Right cardiac atrium (tissue), 5 donors: ENCODE measurements at regions of chr16 and their contacts with region 1.

Region 1: DNA sequence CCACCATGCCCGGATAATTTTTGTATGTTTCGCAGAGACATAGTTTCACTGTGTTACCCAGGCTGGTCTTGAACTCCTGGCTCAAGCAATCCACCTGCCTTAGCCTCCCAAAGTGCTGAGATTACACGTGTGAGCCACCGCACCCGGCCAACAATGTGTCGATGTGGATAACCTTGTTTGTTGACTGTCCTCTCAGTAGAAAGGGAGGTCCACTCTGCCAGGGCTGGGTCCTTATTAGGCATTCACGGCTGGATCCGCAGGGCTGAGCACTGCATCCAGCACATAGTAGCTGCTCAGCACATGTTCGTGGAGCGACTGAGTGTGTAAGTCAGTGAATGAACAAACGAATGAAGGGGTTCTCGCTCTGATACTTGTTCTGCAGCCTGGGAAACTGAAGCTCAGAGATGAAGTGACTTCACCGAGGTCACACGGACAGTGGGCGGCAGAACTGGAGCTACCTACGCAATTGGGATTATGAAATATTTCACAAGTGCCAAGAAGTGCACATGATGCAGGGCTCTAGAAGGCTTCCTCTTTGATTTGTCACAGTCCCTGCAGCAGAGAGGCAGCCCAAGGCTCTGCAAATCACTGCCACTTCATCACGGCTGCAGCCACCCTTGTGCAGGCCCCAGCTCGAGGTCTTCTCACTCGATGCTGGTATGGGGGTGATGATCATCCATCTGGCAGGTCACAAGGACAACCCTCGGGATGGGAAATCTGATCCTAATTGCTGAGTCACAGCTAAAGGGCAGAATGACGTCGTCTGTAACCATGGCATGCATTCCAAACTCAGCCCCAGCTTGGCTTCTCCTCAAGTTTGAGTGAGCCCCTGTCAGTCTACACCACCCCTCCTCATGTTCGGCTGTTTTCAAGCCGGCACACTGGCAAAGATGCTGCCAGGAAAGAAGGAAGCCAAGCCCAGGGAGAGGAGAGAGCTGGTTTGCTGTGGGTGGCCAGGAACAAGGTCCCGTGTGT is 28.0 kb upstream of the SNN start:
- DNase-seq: peak; percentile 90 to 92 (median 92)
- ATAC-seq: peak; percentile 95 to 96
- H3K4me3 ChIP-seq: no peak overlapping the region
- H3K27ac ChIP-seq: peak overlapping the region; percentile 99
- H3K4me1 ChIP-seq: peaks cover 8% of the 10 kb centered on the region
- H3K27me3 ChIP-seq: no peaks in the 10 kb centered on the region

Region 2: GRCh38 chr16:10964039-10964890 is 675.9 kb before region 1 on chr16:
- intact Hi-C with region 1: loop called in 1 of 4 experiments (anchors 10 kb)
- DNase-seq: peak; percentile 82 to 93 (median 92)
- ATAC-seq: peak; percentile 86 to 89
- H3K4me3 ChIP-seq: no peak overlapping the region
- H3K27ac ChIP-seq: peak overlapping the region; percentile 13
- H3K4me1 ChIP-seq: peaks cover 3% of the 10 kb centered on the region
- H3K27me3 ChIP-seq: no peaks in the 10 kb centered on the region

Region 3: GRCh38 chr16:11396241-11397048 is 243.8 kb before region 1 on chr16:
- intact Hi-C with region 1: loop called in 1 of 4 experiments (anchors 5 kb)
- DNase-seq: peak; percentile 71 to 89 (median 89)
- ATAC-seq: peak; percentile 77 to 81
- H3K4me3 ChIP-seq: no peak overlapping the region
- H3K27ac ChIP-seq: no peak overlapping the region
- H3K4me1 ChIP-seq: no peaks in the 10 kb centered on the region
- H3K27me3 ChIP-seq: no peaks in the 10 kb centered on the region

Region 4: DNA sequence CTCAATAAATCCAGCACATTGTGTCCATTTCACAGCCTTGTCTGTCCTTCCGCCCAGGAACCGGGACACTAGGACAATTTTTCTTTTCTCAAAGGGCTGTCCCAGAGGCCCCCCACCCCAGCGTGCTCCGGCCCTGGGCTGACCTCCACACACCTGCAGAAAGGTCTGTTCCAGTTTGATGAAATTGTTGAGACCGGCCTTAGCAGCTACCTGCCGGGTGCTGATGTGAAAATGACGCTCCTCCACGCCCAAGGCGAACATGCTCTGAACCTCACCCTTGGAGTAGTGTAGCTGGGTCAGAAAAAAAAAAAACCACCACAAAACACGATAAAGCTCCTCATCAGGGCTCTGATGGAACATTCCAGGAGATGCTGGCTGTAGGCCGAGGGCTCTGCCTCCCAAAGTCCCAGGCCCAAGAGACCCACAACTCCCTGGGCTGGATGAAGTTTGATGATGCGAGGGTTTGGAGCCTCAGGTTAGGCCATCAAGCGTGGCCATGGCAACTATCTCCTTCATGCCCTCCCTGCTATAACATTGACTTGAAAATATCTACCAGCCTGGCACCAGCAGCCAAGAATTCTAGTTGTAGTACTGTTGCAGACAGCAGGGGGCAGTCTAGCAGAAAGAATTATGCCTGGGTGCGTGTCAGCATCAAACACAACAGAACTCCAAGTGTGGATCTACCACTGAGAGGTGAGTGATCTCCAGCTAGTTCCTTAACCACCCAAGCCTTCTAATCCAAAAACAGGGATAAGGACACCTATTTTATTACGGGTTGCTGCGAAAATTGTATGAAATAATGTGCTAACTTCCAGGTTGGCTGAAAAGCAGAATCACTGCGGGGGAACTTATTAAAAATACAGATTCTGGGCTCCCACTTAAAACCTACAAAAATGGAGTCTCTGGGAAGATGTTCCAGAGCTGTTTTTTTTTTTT is 232.9 kb before region 1 on chr16:
- intact Hi-C with region 1: loop called in 1 of 4 experiments (anchors 5 kb)
- DNase-seq: peak in 1 of 3 donors; percentile 69
- ATAC-seq: peak in 1 of 2 donors; percentile 49
- H3K4me3 ChIP-seq: no peak overlapping the region
- H3K27ac ChIP-seq: no peak overlapping the region
- H3K4me1 ChIP-seq: no peaks in the 10 kb centered on the region
- H3K27me3 ChIP-seq: no peaks in the 10 kb centered on the region

Region 5: GRCh38 chr16:11535471-11535870 is 104.7 kb before region 1 on chr16:
- intact Hi-C with region 1: loop called in 2 of 4 experiments (anchors 5 kb)
- DNase-seq: no peak
- ATAC-seq: no peak
- H3K4me3 ChIP-seq: no peak overlapping the region
- H3K27ac ChIP-seq: no peak overlapping the region
- H3K4me1 ChIP-seq: no peaks in the 10 kb centered on the region
- H3K27me3 ChIP-seq: no peaks in the 10 kb centered on the region

Region 6: GRCh38 chr16:11586856-11587642 is 53.2 kb before region 1 on chr16 and contains the start of gene LITAF:
- intact Hi-C with region 1: loop called in 1 of 4 experiments (anchors 10 kb)
- DNase-seq: peak; percentile 74 to 89 (median 88)
- ATAC-seq: peak; percentile 90 to 92
- H3K4me3 ChIP-seq: peak within 1 kb of the TSS; percentile 99
- H3K27ac ChIP-seq: peak within 1 kb of the TSS; percentile 90
- H3K4me1 ChIP-seq: peaks cover 4% of the 10 kb centered on the region
- H3K27me3 ChIP-seq: no peaks in the 10 kb centered on the region
- total RNA-seq, gene LITAF: 54.0 to 76.5 (median 65.3) TPM